IMR-90 (cell line): ENCODE measurements at regions of chr4 and their contacts with region 1.

Region 1: GRCh38 chr4:84298023-84298718 is 200.9 kb downstream of the NKX6-1 start:
- DNase-seq: no peak
- ATAC-seq: no peak
- H3K4me3 ChIP-seq: no peak overlapping the region
- H3K27ac ChIP-seq: no peak overlapping the region
- H3K4me1 ChIP-seq: no peaks in the 10 kb centered on the region
- H3K27me3 ChIP-seq: no peaks in the 10 kb centered on the region
- CTCF ChIP-seq: no peak
- POLR2A ChIP-seq: no peak
- RAD21 ChIP-seq: no peak

Region 2: GRCh38 chr4:84270887-84271286 is 27.3 kb before region 1 on chr4:
- CTCF ChIA-PET with region 1: no interaction called
- POLR2A ChIA-PET with region 1: no interaction called
- dilution Hi-C with region 1: no loop called
- in situ Hi-C with region 1: no loop called
- intact Hi-C with region 1: loop called (anchors 2 kb)
- DNase-seq: no peak
- ATAC-seq: no peak
- H3K4me3 ChIP-seq: no peak overlapping the region
- H3K27ac ChIP-seq: no peak overlapping the region
- H3K4me1 ChIP-seq: no peaks in the 10 kb centered on the region
- H3K27me3 ChIP-seq: no peaks in the 10 kb centered on the region
- CTCF ChIP-seq: no peak
- POLR2A ChIP-seq: no peak
- RAD21 ChIP-seq: no peak